Activated CD4-positive, alpha-beta memory T cell treated with anti-CD3 and anti-CD28 coated beads for 36 hours (primary cell): ENCODE measurements at regions of chr4 and their contacts with region 1.

Region 1: DNA sequence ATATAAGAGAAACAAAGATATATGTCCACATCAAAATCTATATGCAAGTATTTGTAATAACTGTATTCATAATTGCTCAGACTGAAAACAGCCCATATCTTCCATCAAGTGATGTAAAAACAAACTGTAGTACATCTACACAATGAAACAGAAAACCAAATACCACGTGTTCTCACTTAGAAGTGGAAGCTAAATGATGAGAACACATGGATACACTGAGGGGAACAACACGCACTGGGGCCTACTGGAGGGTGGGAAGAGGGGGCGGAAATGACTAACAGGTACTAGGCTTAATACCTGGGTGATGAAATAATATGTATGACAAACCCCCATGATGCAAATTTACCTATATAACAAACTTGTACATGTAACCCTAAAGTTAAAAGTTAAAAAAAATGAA is 42.7 kb downstream of the UBA6 start:
- DNase-seq: peak; percentile 63
- H3K4me3 Mint-ChIP-seq: no peak overlapping the region
- H3K27ac Mint-ChIP-seq: peak overlapping the region; percentile 63
- H3K4me1 Mint-ChIP-seq: peaks cover 24% of the 10 kb centered on the region
- H3K27me3 Mint-ChIP-seq: no peaks in the 10 kb centered on the region

Region 2: GRCh38 chr4:67674096-67674495 is 15.8 kb after region 1 on chr4:
- CTCF ChIA-PET with region 1: no interaction called
- POLR2A ChIA-PET with region 1: no interaction called
- intact Hi-C with region 1: no loop called
- DNase-seq: no peak
- H3K4me3 Mint-ChIP-seq: no peak overlapping the region
- H3K27ac Mint-ChIP-seq: no peak overlapping the region
- H3K4me1 Mint-ChIP-seq: peaks cover 5% of the 10 kb centered on the region
- H3K27me3 Mint-ChIP-seq: no peaks in the 10 kb centered on the region

Region 3: DNA sequence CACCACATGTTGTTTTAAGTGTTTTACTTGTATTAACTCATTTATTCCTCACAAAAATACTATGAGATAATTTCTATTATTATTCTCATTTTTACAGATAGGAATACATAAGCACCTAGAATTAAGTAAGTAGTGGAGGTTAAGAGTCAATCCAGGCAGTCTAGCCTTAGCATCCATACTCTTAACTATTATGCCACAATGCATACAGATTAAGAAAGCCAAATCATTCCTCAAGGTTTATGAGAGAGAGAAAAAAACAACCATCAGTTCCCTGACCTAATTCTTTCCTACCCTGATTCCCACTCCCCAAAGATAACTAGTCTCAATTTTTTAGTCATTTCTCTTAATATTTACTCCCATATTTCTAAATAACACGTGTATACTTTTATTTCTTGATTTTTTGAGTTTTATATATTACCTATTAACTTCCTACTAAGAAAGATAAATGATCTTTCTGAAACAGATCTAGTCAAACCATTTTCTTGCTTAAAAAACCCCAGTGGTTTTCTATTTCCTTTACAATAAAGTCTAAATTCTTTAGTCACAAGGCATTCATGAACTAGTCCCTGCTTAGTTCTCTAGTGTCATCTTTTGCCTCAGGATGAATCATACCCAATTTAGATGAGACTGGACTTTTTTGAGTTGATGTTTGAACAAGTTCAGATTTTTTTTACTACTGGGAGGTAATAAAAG is 26.7 kb after region 1 on chr4:
- CTCF ChIA-PET with region 1: no interaction called
- POLR2A ChIA-PET with region 1: no interaction called
- intact Hi-C with region 1: loop called (anchors 1 kb)
- DNase-seq: no peak
- H3K4me3 Mint-ChIP-seq: peak overlapping the region; percentile 14
- H3K27ac Mint-ChIP-seq: peak overlapping the region; percentile 81
- H3K4me1 Mint-ChIP-seq: peaks cover 32% of the 10 kb centered on the region
- H3K27me3 Mint-ChIP-seq: no peaks in the 10 kb centered on the region